ENCODE measurements at regions of chr9 and their contacts with region 1.

Region 1: GRCh38 chr9:117704024-117704575 is at the start of gene TLR4:
- DNase-seq: peak; percentile 74
- ATAC-seq: peak; percentile 85 to 92
- total RNA-seq, gene TLR4: 19.8 to 22.6 TPM

Region 2: DNA sequence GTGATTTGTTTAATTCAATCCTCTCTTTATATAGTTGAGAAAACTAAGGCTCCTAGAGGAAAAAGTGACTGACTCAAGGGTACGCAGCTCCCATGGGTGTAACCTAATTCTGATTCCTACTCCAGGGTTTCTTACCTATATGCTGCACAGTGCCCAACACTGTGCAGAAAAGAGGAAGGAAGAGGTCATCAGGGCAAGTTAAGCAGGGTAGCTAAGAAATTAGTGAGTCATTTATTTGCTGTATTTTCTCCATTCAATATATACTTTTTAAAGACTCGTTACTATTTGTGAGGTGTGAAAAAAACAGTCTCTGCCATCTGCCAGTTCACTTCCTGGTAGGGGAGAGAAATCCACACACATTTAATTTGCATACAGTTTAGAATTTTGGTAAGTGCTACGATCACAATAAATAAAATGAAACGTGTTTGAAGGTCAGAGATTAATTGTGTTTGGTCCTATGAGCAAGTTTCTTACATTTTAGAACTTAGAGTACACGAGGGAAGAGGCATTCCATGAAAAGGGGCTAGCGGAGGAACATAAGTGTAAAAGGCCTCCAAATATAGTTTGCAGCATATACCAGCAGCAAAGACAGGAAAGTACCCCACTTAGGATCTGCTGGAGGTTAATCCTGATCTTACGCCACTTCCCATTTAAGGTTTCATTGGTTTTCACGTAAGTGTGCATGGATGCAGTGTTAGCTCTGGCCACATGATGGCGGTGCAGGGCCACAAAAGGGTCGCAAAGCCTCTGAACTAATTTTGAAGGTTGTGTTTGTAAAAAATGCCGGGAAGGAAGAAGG is 59.8 kb before region 1 on chr9:
- intact Hi-C with region 1: no loop called
- DNase-seq: peak; percentile 72
- ATAC-seq: peak; percentile 81 to 82

Region 3: GRCh38 chr9:117777823-117778222 is 73.7 kb after region 1 on chr9:
- intact Hi-C with region 1: loop called in 1 of 2 experiments (anchors 10 kb)
- DNase-seq: no peak
- ATAC-seq: peak in 1 of 2 donors; percentile 65

Measured in left cardiac atrium (tissue), 4 donors.